Ascending aorta (tissue), 2 donors: ENCODE measurements at regions of chr7 and their contacts with region 1.

Region 1: DNA sequence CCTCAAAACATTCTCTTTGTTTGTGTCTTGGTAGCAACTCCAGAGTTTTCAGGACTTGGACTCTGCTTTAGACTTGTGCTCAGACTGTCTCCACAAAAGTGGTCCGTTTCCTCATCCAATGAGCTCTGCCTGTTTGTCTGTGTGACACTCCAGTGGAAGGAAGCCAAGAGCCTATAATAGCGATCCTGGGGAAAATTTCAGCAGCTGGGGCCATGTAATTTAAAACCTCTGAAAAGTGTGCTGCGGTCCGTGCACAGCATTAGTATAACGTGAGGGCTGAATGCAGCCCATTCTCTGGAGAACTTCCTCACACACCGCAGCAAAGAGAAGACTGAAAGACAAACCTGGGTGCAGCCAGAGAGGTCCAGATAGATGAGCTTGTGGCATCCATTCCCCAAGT is at the start of gene LRRC17:
- DNase-seq: no peak
- H3K4me3 ChIP-seq: peak within 1 kb of the TSS; percentile 29 to 65
- H3K27ac ChIP-seq: peak within 1 kb of the TSS; percentile 81 to 91
- H3K4me1 ChIP-seq: peaks cover 13 to 28% of the 10 kb centered on the region in 2 donors
- H3K27me3 ChIP-seq: no peaks in the 10 kb centered on the region
- CTCF ChIP-seq: no peak
- total RNA-seq, gene LRRC17: 10.5 TPM

Region 2: GRCh38 chr7:102874166-102874829 is 38.4 kb before region 1 on chr7:
- intact Hi-C with region 1: loop called (anchors 5 kb)
- DNase-seq: no peak
- H3K4me3 ChIP-seq: no peak overlapping the region
- H3K27ac ChIP-seq: peak overlapping the region; percentile 59 to 74
- H3K4me1 ChIP-seq: peaks cover 5 to 26% of the 10 kb centered on the region in 2 donors
- H3K27me3 ChIP-seq: no peaks in the 10 kb centered on the region
- CTCF ChIP-seq: no peak

Region 3: DNA sequence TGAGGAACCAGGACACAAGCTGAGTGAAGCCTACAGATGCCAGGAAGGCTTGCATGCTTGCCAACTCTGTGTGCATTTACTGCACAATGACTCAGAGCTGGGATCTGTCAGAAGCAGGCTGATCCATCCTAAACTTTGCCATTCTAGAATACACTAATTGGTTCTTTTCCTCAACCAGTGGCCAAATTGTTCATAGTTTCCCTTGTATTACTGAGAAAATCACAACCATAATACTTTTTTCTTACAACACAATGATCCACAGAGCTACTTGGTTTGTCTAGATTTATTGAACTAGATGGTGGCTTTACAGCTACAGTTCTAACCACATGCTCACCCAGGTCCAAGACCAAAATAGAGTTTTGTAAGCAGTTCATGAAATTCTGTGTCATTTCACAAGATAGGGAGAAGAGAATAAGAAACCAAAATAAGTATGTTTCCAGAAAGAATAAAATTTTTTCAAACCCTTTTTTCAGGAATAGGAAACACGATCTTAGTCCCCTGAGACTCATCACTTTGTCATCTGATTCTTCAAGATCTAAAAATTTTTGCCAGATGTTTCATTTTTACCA is 21.0 kb before region 1 on chr7:
- intact Hi-C with region 1: loop called (anchors 2 kb)
- DNase-seq: peak; percentile 16 to 85
- H3K4me3 ChIP-seq: no peak overlapping the region
- H3K27ac ChIP-seq: peak overlapping the region; percentile 14 to 39
- H3K4me1 ChIP-seq: peaks cover 9 to 55% of the 10 kb centered on the region in 2 donors
- H3K27me3 ChIP-seq: no peaks in the 10 kb centered on the region
- CTCF ChIP-seq: no peak

Region 4: DNA sequence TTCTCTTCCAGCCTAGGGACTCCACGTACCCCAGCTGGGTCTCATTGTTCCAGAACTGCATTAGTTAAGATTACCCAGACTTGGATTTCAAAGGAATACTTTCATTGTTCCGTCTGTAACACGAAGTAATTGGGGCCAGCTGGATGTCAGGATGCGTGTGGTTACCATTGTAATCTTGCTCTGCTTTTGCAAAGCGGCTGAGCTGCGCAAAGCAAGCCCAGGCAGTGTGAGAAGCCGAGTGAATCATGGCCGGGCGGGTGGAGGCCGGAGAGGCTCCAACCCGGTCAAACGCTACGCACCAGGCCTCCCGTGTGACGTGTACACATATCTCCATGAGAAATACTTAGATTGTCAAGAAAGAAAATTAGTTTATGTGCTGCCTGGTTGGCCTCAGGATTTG is 21.0 kb after region 1 on chr7:
- intact Hi-C with region 1: loop called (anchors 2 kb)
- DNase-seq: peak; percentile 37 to 92
- H3K4me3 ChIP-seq: peak overlapping the region in 1 of 2 donors; percentile 37
- H3K27ac ChIP-seq: peak overlapping the region; percentile 81 to 88
- H3K4me1 ChIP-seq: peaks cover 3 to 31% of the 10 kb centered on the region in 2 donors
- H3K27me3 ChIP-seq: no peaks in the 10 kb centered on the region
- CTCF ChIP-seq: no peak

Region 5: DNA sequence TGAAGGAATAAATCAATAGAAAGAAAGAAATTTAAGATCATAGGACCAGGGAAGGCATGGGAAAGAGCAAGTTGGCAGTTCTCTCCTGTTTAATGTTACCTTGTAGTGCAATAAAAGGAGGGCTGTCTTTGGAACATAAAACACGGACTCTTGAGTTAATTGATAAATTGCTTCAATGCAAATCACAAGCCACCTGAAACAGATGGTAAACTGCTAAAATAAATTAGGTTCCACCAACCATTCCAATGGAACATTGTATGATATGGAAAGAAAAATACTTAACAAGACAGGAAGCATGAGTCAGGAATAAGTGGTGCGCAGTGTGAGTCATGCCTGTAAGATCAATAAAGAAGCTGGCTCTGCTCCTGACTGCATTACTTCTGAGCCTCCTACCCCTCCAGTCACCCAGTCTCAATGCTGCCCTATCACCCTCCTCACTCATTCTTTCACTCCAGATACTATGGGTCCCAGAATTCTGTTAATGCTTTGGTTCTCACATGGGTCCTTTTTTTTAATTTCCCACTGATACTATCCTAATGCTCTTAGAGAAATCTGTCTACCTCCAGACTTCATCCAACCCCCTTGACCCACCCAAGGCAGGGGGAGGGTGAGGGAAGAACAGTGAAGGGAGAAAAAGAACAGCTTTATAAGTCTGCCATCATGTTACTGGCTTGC is 78.9 kb after region 1 on chr7:
- intact Hi-C with region 1: loop called (anchors 2 kb)
- DNase-seq: peak in 1 of 2 donors; percentile 84
- H3K4me3 ChIP-seq: no peak overlapping the region
- H3K27ac ChIP-seq: peak overlapping the region; percentile 81 to 92
- H3K4me1 ChIP-seq: peaks cover 14 to 41% of the 10 kb centered on the region in 2 donors
- H3K27me3 ChIP-seq: no peaks in the 10 kb centered on the region
- CTCF ChIP-seq: no peak

Region 6: DNA sequence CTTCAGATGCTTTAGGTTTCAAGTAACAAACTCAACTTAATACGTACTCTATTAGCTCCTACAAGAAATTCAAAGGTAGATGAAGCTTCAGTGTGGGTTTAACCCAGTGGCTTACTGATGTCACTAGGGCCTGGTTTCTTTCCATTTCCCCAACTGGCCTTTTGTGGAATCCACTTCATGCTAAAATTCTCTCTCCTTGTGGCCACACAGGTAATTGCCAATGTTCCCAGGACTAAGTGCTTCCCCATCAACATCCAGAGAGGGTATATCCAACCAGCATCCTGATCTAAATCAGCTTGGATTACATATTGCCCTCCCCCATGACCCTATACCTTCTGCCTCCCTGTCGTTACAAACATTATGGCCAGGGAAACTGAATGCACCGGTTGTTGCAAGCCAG is 151.2 kb after region 1 on chr7:
- intact Hi-C with region 1: loop called (anchors 5 kb)
- DNase-seq: no peak
- H3K4me3 ChIP-seq: no peak overlapping the region
- H3K27ac ChIP-seq: no peak overlapping the region
- H3K4me1 ChIP-seq: no peaks in the 10 kb centered on the region
- H3K27me3 ChIP-seq: no peaks in the 10 kb centered on the region
- CTCF ChIP-seq: no peak

Region 7: GRCh38 chr7:103762065-103762760 is 849.5 kb after region 1 on chr7:
- intact Hi-C with region 1: no loop called
- DNase-seq: no peak
- H3K4me3 ChIP-seq: no peak overlapping the region
- H3K27ac ChIP-seq: no peak overlapping the region
- H3K4me1 ChIP-seq: no peaks in the 10 kb centered on the region
- H3K27me3 ChIP-seq: no peaks in the 10 kb centered on the region
- CTCF ChIP-seq: no peak